Activated CD4-positive, alpha-beta memory T cell treated with anti-CD3 and anti-CD28 coated beads, Interleukin-2, amount 10 ng/mL, durations not matched to agents 7 days and 5 days (primary cell): ENCODE measurements at regions of chr17 and their contacts with region 1.

Region 1: DNA sequence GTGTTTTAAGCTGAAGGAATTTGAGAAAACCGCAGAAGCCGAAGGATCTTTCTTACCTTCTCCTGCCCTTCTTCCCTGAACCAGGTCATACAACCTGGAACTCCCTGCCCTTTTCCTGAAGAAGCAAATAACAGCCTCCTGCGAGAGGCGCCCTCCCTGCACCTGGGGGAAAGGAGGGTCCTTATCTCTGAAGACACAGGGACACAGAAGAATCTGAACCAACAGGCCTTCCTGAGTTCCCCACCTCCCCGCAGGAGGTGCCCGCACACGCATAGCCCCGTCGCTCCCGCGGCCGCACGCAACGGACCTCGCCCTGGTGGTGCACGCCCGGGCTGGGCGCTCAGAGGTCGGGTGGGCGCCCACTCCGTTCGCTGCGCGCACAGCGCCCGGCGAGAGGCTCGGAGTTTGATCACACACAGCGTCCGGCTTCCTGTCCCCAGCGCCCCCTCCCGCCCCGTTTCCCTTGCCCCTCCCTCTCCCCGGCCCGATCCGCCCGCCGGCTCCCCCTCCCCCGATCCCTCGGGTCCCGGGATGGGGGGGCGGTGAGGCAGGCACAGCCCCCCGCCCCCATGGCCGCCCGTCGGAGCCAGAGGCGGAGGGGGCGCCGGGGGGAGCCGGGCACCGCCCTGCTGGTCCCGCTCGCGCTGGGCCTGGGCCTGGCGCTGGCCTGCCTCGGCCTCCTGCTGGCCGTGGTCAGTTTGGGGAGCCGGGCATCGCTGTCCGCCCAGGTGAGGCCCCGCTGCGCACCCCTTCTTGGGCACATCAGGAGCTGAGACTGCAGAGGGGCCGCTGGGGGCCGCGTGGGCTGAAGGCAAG is at the start of gene TNFSF12:
- DNase-seq: peak; percentile 73
- H3K4me3 Mint-ChIP-seq: peak within 1 kb of the TSS; percentile 99
- H3K27ac Mint-ChIP-seq: peak within 1 kb of the TSS; percentile 93
- H3K4me1 Mint-ChIP-seq: peaks cover 58% of the 10 kb centered on the region
- H3K27me3 Mint-ChIP-seq: no peaks in the 10 kb centered on the region
- total RNA-seq, gene TNFSF12: 79.8 to 86.7 TPM

Region 2: DNA sequence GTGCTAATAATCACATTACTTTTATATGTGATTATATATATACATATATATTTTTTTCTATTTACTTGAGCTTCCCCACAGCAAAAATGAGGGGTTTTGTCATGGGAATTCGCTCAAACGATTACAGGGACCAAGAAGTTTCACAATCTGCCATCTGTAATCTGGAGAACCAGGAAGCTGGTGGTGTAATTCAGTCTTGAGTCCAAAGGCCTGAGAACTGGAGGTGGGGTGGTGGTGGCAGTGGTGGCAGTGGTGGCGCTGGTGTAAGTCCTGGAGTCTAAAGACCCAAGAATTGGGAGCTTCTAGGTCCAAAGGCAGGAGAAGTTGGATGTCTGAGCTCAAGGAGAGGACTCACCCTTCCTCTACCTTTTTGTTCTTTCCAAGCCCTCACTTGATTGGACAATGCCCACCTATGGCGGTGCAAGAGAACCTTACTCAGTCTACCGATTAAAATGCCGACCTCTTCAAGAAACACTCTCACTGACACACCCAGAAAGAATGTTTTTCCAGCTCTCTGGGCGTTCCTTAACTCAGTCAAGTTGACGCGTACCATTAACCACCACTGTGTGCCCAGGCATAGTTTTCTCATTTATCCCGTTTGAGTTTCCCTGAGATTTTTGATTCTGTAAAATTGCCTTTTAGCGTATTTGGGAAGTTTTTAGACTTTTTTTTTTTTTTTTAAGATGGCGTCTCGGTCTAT is 32.7 kb before region 1 on chr17:
- CTCF ChIA-PET with region 1: interaction called, 32 read pairs
- POLR2A ChIA-PET with region 1: interaction called, 11 read pairs
- DNase-seq: no peak
- H3K4me3 Mint-ChIP-seq: no peak overlapping the region
- H3K27ac Mint-ChIP-seq: no peak overlapping the region
- H3K4me1 Mint-ChIP-seq: no peaks in the 10 kb centered on the region
- H3K27me3 Mint-ChIP-seq: no peaks in the 10 kb centered on the region

Region 3: DNA sequence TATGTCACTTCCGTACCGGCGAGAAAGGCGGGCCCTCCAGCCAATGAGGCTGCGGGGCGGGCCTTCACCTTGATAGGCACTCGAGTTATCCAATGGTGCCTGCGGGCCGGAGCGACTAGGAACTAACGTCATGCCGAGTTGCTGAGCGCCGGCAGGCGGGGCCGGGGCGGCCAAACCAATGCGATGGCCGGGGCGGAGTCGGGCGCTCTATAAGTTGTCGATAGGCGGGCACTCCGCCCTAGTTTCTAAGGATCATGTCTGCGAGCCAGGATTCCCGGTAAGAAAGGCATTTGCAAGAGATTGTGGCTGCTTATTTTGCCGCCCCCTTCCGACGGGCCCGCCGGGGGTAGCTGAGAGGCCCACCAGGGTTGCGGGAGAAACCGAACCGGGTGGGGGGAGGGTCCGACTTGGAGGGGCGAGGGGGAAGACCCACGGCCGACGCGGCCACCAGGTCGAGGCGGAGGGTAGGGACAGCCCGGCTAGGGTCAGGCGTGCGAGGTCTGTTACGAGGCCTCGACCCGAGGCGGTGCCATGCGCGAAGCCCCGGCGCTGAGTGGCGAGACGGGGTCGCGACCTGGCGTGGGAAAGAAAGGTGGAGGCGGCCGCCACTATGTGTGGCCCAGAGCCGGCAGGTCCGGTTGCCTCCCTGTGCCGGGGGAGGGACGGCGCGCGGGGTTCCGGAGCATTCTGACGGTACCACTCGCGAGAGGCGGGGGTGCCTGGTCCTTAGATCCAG is 24.0 kb after region 1 on chr17:
- CTCF ChIA-PET with region 1: interaction called, 3 read pairs
- POLR2A ChIA-PET with region 1: interaction called, 11 read pairs
- DNase-seq: peak; percentile 100
- H3K4me3 Mint-ChIP-seq: peak overlapping the region; percentile 93
- H3K27ac Mint-ChIP-seq: peak overlapping the region; percentile 99
- H3K4me1 Mint-ChIP-seq: peaks cover 63% of the 10 kb centered on the region
- H3K27me3 Mint-ChIP-seq: no peaks in the 10 kb centered on the region